ENCODE measurements at regions of chr4 and their contacts with region 1.

Region 1: DNA sequence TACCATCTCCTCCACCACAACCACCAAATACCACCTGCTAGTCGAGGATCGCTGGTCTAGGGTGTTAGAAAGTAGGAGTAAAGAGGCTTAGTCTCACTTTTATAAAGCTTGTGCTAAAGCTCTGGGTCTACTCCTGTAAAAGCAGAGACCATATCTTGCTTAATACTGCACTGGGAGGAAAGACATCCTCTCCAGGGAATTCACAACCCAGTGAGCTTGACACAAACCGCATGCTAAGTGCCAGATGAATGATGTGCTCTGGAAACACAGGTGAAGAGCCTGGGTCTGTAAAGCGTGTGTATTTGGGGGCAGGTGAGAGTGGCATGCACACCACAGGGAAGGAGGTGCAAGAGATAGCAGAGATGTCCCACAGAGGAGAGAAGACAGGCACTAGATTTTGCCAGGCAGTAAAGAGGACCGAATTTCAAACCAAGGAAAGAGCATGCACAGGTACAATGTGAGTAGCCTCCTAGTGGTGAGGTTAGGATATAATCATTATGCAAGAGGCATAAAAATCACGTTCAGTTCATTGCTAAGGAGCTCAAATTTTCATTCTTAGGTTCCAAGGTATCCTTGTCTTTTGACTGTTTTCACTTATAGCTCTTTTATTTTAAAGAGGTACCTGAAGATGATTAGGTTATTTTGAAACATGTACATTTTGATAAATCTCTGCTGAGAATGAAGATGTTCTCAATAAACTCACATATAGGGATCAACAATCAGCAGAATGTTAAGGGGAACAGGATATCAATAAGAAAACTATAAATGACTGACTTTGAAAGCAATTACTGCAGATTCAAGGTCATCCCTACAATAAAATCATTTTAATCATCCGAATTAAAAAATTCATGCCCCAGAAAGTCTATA is 20.7 kb downstream of the TAPT1 start:
- DNase-seq: no peak
- H3K4me3 Mint-ChIP-seq: no peak overlapping the region
- H3K27ac Mint-ChIP-seq: peak overlapping the region; percentile 16
- H3K4me1 Mint-ChIP-seq: peaks cover 44% of the 10 kb centered on the region
- H3K27me3 Mint-ChIP-seq: no peaks in the 10 kb centered on the region

Region 2: GRCh38 chr4:16264798-16265197 is 59.3 kb after region 1 on chr4:
- intact Hi-C with region 1: loop called (anchors 2 kb)
- DNase-seq: no peak
- H3K4me3 Mint-ChIP-seq: no peak overlapping the region
- H3K27ac Mint-ChIP-seq: no peak overlapping the region
- H3K4me1 Mint-ChIP-seq: no peaks in the 10 kb centered on the region
- H3K27me3 Mint-ChIP-seq: no peaks in the 10 kb centered on the region